Natural killer cell (primary cell): ENCODE measurements at regions of chr7 and their contacts with region 1.

Region 1: DNA sequence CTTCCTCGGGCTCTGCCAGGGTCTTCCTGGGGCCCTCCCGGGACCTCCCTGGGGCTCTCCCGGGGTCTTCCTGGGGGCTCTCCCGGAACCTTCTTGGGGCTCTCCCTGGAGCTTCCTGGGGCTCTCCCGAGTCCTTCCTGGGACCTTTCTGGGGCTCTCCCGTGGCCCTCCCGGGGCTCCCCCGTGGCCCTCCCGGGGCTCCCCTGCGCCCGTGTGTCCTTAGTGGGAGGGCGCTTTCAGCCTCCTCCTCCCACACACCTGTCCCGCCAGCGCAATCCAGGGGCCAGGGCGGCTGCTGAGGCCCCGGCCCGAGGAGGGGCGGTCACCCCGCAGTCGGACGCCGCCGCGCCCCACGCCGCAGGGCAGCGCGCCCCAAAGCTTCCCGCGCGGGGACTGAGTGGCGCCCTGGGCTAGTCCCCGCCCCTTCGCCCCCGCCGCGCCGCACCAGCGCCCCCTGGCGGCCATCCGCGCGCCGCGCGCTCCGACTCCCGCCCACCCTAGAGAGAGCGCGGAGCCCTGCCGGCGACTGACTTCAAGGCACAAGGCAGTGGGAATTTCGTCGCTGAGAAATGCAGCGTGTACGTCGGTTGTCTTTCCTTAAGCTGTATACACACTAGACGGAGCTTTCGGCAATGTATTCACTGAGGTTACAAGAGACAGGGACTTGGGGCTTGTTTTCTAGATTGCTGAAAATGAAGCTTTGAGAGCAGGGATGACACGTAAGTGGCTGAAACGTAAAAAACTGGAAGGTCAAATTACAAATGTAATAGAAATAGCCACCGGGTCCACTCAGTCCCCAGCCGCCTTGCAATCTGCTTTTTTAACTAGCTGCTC is 47.1 kb downstream of the INSIG1 start:
- DNase-seq: peak; percentile 84 to 88
- ATAC-seq: peak; percentile 96 to 99 (median 98)
- H3K4me3 ChIP-seq: peak overlapping the region; percentile 35
- H3K4me3 Mint-ChIP-seq: peak overlapping the region; percentile 56
- H3K27ac ChIP-seq: no peak overlapping the region
- H3K27ac Mint-ChIP-seq: no peak overlapping the region
- H3K4me1 ChIP-seq: peaks cover 10% of the 10 kb centered on the region
- H3K4me1 Mint-ChIP-seq: peaks cover 5 to 12% of the 10 kb centered on the region in 2 donors
- H3K27me3 ChIP-seq: peaks cover 3% of the 10 kb centered on the region
- H3K27me3 Mint-ChIP-seq: peaks cover 11 to 14% of the 10 kb centered on the region in 2 donors
- CTCF ChIP-seq: peak; percentile 82

Region 2: GRCh38 chr7:154913638-154914312 is 431.0 kb before region 1 on chr7:
- intact Hi-C with region 1: loop called (anchors 5 kb)
- DNase-seq: peak; percentile 85 to 90
- ATAC-seq: peak; percentile 87 to 99 (median 98)
- H3K4me3 ChIP-seq: peak overlapping the region; percentile 3
- H3K4me3 Mint-ChIP-seq: peak overlapping the region; percentile 86
- H3K27ac ChIP-seq: no peak overlapping the region
- H3K27ac Mint-ChIP-seq: peak overlapping the region in 1 of 2 donors; percentile 71
- H3K4me1 ChIP-seq: peaks cover 13% of the 10 kb centered on the region
- H3K4me1 Mint-ChIP-seq: peaks cover 0 to 4% of the 10 kb centered on the region in 2 donors
- H3K27me3 ChIP-seq: peaks cover 5% of the 10 kb centered on the region
- H3K27me3 Mint-ChIP-seq: peaks cover 16 to 26% of the 10 kb centered on the region in 2 donors
- CTCF ChIP-seq: peak; percentile 93

Region 3: DNA sequence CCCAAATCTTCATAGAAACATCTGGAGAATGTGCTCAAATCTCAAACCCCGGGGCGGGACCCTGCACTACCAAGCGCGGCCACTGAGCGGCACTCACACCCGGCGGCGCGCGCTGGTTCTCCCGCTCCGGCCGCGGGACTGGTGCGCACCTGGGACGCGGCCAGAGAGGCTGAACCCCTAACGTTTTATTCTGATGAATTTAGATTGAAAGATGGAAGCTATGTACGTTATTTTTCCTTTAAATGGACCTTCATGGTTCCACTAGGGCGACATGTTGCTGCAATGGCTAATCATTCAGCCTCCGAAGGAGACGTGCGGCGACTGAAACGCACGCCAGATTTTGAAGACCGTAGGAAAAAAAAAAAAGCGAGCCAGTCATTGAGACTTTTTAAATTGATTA is 154.1 kb before region 1 on chr7:
- intact Hi-C with region 1: loop called (anchors 1 kb)
- DNase-seq: peak; percentile 66 to 70
- ATAC-seq: peak; percentile 77 to 99 (median 92)
- H3K4me3 ChIP-seq: no peak overlapping the region
- H3K4me3 Mint-ChIP-seq: no peak overlapping the region
- H3K27ac ChIP-seq: no peak overlapping the region
- H3K27ac Mint-ChIP-seq: no peak overlapping the region
- H3K4me1 ChIP-seq: peaks cover 3% of the 10 kb centered on the region
- H3K4me1 Mint-ChIP-seq: peaks cover 5 to 11% of the 10 kb centered on the region in 2 donors
- H3K27me3 ChIP-seq: no peaks in the 10 kb centered on the region
- H3K27me3 Mint-ChIP-seq: peaks cover 14 to 22% of the 10 kb centered on the region in 2 donors
- CTCF ChIP-seq: peak; percentile 83

Region 4: GRCh38 chr7:155356323-155357105 is 11.7 kb after region 1 on chr7:
- intact Hi-C with region 1: no loop called
- DNase-seq: peak in 1 of 2 donors; percentile 25
- ATAC-seq: no peak
- H3K4me3 ChIP-seq: no peak overlapping the region
- H3K4me3 Mint-ChIP-seq: no peak overlapping the region
- H3K27ac ChIP-seq: no peak overlapping the region
- H3K27ac Mint-ChIP-seq: no peak overlapping the region
- H3K4me1 ChIP-seq: no peaks in the 10 kb centered on the region
- H3K4me1 Mint-ChIP-seq: no peaks in the 10 kb centered on the region
- H3K27me3 ChIP-seq: no peaks in the 10 kb centered on the region
- H3K27me3 Mint-ChIP-seq: peaks cover 6 to 17% of the 10 kb centered on the region in 2 donors
- CTCF ChIP-seq: no peak